HepG2 (cell line): ENCODE measurements at regions of chr7 and their contacts with region 1.

Region 1: DNA sequence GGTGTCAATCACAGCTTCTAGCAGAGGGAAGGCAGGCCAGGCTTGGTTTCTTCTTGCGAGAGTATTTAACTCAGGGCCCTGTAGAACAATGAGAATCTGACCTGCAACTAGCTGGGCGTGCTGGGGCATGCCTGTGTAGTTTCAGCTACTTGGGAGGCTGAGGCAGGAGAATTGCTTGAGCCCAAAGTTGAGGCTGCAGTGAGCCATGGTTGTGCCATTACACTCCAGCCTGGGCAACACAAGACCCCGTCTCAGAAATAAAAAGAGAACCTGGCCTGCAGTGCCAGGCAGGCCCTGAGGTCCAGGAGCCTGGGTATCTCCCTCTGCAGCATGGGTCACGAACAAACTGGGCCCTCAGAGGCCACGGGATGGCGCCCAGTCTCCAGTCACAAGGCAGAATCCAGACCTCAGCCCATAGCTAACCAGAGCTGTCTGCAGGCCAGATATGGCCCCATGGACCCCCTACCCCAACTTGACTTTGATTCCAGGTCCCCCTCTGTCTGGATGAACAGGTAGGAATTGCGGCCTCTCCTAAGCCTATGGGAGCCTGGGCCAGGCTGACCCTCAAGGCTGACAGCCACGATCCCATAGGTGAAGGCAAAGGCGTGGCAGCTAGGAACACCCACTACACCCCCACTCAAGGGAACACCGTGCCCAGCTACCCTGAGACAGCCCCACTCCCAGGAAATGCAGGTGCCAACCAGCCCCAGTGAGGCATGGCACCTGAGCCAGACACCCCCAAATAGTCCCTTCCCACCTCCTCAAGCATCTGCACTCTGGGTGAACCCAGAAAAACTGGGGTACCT is 102.7 kb upstream of the TNRC18 start:
- DNase-seq: peak; percentile 57
- ATAC-seq: peak; percentile 6
- H3K4me3 ChIP-seq: no peak overlapping the region
- H3K27ac ChIP-seq: peak overlapping the region; percentile 38
- H3K4me1 ChIP-seq: peaks cover 21% of the 10 kb centered on the region
- H3K27me3 ChIP-seq: no peaks in the 10 kb centered on the region
- CTCF ChIP-seq: peak; percentile 70
- EP300 ChIP-seq: no peak
- POLR2A ChIP-seq: peak in 1 of 2 experiments; percentile 76; a peak in 2 of 4 replicates
- RAD21 ChIP-seq: peak; percentile 31

Region 2: DNA sequence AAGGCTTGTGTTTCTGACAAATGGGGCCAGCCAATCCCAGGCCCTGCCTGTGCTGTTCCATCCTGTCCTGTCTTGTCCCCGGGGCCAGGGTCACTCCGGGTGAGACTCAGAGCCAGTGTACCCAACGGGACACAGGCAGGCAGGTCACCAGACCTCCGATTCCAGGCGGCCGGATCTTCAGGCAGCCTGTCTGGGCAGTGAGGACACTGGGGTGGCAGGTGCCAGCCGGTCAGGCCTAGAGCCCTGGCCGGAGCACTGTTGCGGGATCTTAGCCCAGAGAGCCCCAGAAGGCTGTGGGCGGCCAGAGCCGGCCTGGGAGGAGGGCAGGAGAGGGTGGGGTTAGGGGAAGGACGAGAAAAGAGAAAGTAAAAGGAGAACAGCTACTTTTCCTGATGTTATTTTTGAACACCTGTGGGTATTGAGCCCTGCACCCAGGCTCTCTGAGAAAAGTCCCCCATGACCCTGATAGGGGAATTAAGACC is 31.7 kb after region 1 on chr7:
- CTCF ChIA-PET with region 1: interaction called, 3 read pairs
- POLR2A ChIA-PET with region 1: interaction called, 38 read pairs
- in situ Hi-C with region 1: no loop called
- intact Hi-C with region 1: no loop called
- DNase-seq: peak; percentile 63
- ATAC-seq: peak; percentile 49
- H3K4me3 ChIP-seq: peak overlapping the region; percentile 48 to 68 (median 55); a peak in 5 of 6 replicates
- H3K27ac ChIP-seq: peak overlapping the region; percentile 87
- H3K4me1 ChIP-seq: peaks cover 54% of the 10 kb centered on the region
- H3K27me3 ChIP-seq: no peaks in the 10 kb centered on the region
- CTCF ChIP-seq: no peak
- EP300 ChIP-seq: no peak
- POLR2A ChIP-seq: peak in 1 of 2 experiments; percentile 19; a peak in 1 of 4 replicates
- RAD21 ChIP-seq: no peak